Right ventricle myocardium inferior (tissue), 1 donor: ENCODE measurements at regions of chrX and their contacts with region 1.

Region 1: GRCh38 chrX:51892921-51893745 is at the start of gene MAGED1:
- DNase-seq: peak; percentile 92
- ATAC-seq: peak; percentile 91
- total RNA-seq, gene MAGED1: 56.4 TPM

Region 2: DNA sequence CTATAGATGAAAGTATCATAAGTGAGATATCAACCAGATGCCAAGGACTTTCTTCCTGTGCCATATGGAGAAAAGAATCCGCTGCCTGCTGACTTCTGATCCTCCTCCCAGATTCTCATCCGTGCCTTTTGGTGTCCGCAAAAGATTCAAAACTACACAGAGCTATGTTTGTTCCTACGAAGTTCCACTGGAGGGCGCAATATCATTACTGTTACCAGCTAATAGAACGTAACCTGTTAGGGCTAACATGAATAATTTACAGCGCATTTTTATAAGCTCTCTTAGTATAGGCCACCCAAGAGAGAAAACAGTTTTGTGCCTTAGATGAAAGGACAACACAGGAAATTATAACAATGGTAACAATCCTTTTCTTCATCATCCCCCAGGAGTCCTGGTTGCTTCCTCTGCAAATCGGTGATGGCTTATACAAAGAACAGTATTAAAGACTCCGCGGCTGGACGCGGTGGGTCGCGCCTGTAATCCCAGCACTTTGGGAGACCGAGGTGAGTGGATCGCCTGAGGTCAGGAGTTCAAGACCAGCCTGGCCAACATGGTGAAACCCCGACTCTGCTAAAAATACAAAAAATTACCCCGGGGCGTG is 251.6 kb before region 1 on chrX:
- intact Hi-C with region 1: no loop called
- DNase-seq: no peak
- ATAC-seq: no peak

Region 3: GRCh38 chrX:51795136-51795535 is 98.0 kb before region 1 on chrX:
- intact Hi-C with region 1: no loop called
- DNase-seq: no peak
- ATAC-seq: no peak

Region 4: GRCh38 chrX:52261463-52262194 is 368.5 kb after region 1 on chrX:
- intact Hi-C with region 1: loop called (anchors 2 kb)
- DNase-seq: peak; percentile 93
- ATAC-seq: peak; percentile 100